ENCODE measurements at regions of chr4 and their contacts with region 1.

Region 1: GRCh38 chr4:185304944-185305690 is 90.6 kb downstream of the LRP2BP start:
- DNase-seq: peak; percentile 68
- ATAC-seq: peak; percentile 73
- H3K4me3 ChIP-seq: no peak overlapping the region
- H3K27ac ChIP-seq: peak overlapping the region; percentile 99
- H3K4me1 ChIP-seq: peaks cover 59% of the 10 kb centered on the region
- H3K27me3 ChIP-seq: no peaks in the 10 kb centered on the region
- CTCF ChIP-seq: peak; percentile 70 to 79 (median 73)
- EP300 ChIP-seq: no peak
- POLR2A ChIP-seq: no peak
- RAD21 ChIP-seq: peak; percentile 83

Region 2: DNA sequence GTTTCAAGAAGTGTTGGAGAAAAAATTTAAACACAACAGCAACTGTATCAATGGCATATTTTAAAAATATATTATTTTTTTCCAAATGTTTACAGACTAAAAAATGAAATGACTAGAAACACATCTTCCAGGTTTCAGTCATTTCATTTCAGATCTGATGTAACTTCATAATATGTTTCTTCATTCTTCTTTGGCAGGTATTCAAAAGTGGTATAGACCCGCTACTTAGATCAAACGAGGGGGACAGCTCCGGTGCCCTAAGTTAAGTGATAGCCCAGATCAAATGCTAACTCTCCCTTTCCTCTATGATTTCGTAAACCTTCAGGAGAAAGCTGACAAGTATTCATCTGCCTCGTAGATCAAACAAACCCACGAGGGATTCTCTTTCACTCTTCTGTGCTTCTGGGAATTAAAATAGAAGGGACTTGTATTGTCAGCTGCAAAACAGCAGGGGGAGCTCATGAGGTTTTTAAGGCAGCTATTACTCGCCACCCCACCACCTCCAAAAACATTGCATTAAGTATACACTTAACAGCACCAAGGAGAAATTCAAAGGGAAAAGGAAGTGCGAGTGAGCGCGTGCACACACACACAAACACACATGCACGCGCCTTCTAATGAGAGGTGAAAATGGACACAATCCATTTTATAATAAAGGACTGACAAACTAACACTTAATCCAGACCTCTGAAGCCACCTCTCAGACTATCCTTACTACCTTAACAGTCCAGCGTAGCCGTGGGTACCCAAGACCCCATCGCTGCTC is 265.4 kb before region 1 on chr4:
- CTCF ChIA-PET with region 1: interaction called, 7 read pairs
- POLR2A ChIA-PET with region 1: no interaction called
- RAD21 ChIA-PET with region 1: interaction called, 19 read pairs
- SMC1A ChIA-PET with region 1: interaction called, 12 read pairs
- in situ Hi-C with region 1: no loop called
- intact Hi-C with region 1: loop called (anchors 5 kb)
- DNase-seq: peak; percentile 23
- ATAC-seq: peak; percentile 83
- H3K4me3 ChIP-seq: no peak overlapping the region
- H3K27ac ChIP-seq: no peak overlapping the region
- H3K4me1 ChIP-seq: no peaks in the 10 kb centered on the region
- H3K27me3 ChIP-seq: no peaks in the 10 kb centered on the region
- CTCF ChIP-seq: peak; percentile 73 to 80 (median 77)
- EP300 ChIP-seq: no peak
- POLR2A ChIP-seq: no peak
- RAD21 ChIP-seq: peak; percentile 74

Region 3: DNA sequence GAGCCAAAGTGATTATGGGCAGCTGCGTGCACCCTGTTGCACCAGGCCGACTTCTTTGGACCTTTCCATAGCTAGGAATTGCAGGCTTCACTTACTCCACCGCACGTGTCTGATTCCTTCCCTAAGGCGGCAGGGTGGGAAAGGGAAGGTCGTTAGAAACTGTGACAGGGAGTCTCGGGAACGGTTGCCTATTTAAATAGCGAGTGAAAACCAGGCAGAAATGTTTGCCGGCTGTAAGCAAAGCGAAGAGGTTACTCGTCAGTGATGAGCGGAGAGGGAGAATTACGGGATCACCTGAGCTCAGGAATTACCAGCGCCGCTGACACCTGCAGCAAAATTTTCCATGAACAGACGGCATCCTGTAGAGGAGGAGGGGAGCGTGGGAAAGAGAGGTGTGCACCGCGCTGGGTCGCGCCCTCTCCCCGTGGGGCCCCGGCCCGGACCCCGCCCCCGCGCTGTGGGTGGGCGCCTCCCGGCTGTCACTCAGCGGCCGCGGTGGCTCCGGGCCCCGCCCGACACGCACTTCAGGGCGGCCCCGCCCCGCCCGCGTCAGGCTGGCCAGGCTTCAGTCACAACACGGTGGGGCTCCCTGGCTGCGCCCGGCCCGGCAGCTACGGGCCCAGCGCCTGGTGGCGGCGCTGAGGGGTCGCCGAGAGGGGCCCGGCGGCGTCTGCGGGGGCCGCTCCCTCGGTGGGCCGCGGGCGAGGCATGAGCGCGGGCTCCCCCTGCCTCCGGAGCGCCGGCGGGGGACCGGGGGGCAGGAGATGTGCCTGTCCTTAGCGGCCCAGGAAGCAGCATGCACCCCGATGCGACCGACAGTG is 95.9 kb before region 1 on chr4 and contains the start of gene SNX25:
- CTCF ChIA-PET with region 1: interaction called, 14 read pairs
- POLR2A ChIA-PET with region 1: interaction called, 17 read pairs
- RAD21 ChIA-PET with region 1: interaction called, 28 read pairs
- SMC1A ChIA-PET with region 1: interaction called, 119 read pairs
- in situ Hi-C with region 1: no loop called
- intact Hi-C with region 1: loop called (anchors 2 kb)
- DNase-seq: no peak
- ATAC-seq: peak; percentile 80
- H3K4me3 ChIP-seq: peak within 1 kb of the TSS; percentile 100
- H3K27ac ChIP-seq: peak within 1 kb of the TSS; percentile 84
- H3K4me1 ChIP-seq: peaks cover 28% of the 10 kb centered on the region
- H3K27me3 ChIP-seq: no peaks in the 10 kb centered on the region
- CTCF ChIP-seq: peak in 2 of 3 experiments; percentile 9 to 27; a peak in 1 of 6 replicates
- EP300 ChIP-seq: no peak
- POLR2A ChIP-seq: peak; percentile 85
- RAD21 ChIP-seq: peak; percentile 41; the same call in 1 of the 2 replicates
- polyA plus RNA-seq, gene SNX25: 19.6 to 27.8 TPM

Region 4: DNA sequence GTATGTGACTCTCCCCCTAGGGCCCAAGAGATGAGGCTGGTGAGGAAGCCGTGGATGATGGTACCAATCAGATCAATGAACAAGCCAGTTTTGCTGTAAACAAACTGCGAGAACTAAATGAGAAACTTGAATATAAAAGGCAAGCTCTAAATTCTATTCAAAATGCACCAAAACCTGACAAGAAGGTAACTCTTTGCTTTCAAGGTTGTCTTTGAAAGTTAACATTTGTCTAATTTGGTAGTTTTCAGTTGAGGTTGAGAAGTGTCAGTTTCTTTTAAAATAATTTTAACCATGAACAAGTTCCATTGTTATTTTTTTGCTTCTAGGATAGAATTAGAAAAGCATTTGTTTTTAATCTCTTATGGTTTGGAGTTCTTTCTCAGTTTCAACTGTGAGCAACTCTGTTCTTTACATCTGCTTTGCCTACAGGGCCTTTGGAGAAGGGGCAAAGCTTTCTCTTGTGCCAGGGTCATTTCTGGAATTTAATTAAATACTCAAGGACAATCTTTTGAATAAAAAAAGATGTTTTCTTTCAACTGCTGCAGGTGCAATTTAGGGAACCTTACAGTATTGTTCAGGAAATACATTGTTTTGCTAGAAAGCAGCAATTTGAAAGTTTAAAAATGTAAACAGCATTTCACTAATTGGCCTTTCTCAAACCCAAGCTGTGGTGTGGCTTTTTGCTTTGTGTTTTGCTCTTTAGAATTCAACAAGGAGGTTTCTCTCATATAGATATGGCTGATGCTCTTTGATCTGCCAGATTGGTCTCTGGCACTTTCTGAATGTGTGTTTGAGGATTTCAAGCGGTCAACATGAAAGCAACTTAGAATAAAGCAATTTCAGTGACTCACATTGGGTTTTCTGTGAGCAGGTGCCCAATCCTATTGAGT is 27.7 kb after region 1 on chr4:
- CTCF ChIA-PET with region 1: interaction called, 10 read pairs
- POLR2A ChIA-PET with region 1: interaction called, 13 read pairs
- RAD21 ChIA-PET with region 1: interaction called, 6 read pairs
- SMC1A ChIA-PET with region 1: interaction called, 132 read pairs
- in situ Hi-C with region 1: no loop called
- intact Hi-C with region 1: loop called (anchors 1 kb)
- DNase-seq: peak; percentile 79
- ATAC-seq: peak; percentile 94
- H3K4me3 ChIP-seq: no peak overlapping the region
- H3K27ac ChIP-seq: peak overlapping the region; percentile 89
- H3K4me1 ChIP-seq: peaks cover 56% of the 10 kb centered on the region
- H3K27me3 ChIP-seq: no peaks in the 10 kb centered on the region
- CTCF ChIP-seq: no peak
- EP300 ChIP-seq: peak; percentile 51 to 55; a peak in 3 of 4 replicates
- POLR2A ChIP-seq: no peak
- RAD21 ChIP-seq: no peak

Region 5: GRCh38 chr4:185352741-185353140 is 47.6 kb after region 1 on chr4:
- CTCF ChIA-PET with region 1: interaction called, 14 read pairs
- POLR2A ChIA-PET with region 1: interaction called, 24 read pairs
- RAD21 ChIA-PET with region 1: interaction called, 14 read pairs
- SMC1A ChIA-PET with region 1: interaction called, 31 read pairs
- in situ Hi-C with region 1: no loop called
- intact Hi-C with region 1: no loop called
- DNase-seq: no peak
- ATAC-seq: peak; percentile 40
- H3K4me3 ChIP-seq: no peak overlapping the region
- H3K27ac ChIP-seq: 0 out of 2 replicates have a peak overlapping the region, but pooled peaks have one; percentile 25
- H3K4me1 ChIP-seq: peaks cover 28% of the 10 kb centered on the region
- H3K27me3 ChIP-seq: no peaks in the 10 kb centered on the region
- CTCF ChIP-seq: no peak
- EP300 ChIP-seq: no peak
- POLR2A ChIP-seq: peak; percentile 47; the same call in 1 of the 2 replicates
- RAD21 ChIP-seq: no peak

Region 6: DNA sequence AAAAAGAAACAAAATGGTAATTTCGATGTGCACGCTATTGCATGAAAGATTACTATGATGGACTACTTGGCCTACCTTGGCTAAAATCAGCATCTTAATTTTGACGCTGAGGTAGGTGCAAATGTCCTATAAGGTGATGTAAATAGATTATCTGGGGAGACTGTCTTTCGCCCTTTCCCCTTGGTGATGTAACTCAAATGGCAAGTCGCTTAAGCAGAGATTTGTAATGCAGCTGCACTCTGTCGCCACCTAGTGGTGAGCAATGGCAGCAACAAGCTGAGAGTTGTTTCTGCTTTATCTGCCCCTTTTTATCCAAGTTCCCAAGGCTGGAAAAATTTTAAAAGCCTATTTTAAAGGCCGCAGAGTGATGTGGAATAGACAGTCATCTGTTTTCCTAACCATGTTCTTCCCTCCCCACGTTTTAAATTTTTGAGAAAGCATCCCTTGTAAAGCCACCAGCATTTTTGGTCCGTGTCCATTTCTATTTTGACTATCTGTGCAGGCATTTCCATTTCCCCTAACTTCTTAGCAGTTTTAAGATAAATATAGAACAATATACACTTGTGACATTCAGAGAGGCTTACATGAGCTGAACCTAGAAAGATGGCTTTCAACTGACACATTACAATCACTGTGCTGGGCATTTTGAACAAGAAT is 292.5 kb after region 1 on chr4:
- CTCF ChIA-PET with region 1: interaction called, 3 read pairs
- POLR2A ChIA-PET with region 1: no interaction called
- RAD21 ChIA-PET with region 1: interaction called, 4 read pairs
- SMC1A ChIA-PET with region 1: interaction called, 3 read pairs
- in situ Hi-C with region 1: no loop called
- intact Hi-C with region 1: loop called (anchors 5 kb)
- DNase-seq: peak; percentile 33
- ATAC-seq: peak; percentile 84
- H3K4me3 ChIP-seq: no peak overlapping the region
- H3K27ac ChIP-seq: no peak overlapping the region
- H3K4me1 ChIP-seq: peaks cover 3% of the 10 kb centered on the region; the same call in 1 of the 2 replicates
- H3K27me3 ChIP-seq: no peaks in the 10 kb centered on the region
- CTCF ChIP-seq: peak; percentile 95 to 99 (median 99); a peak in 5 of 6 replicates
- EP300 ChIP-seq: no peak
- POLR2A ChIP-seq: no peak
- RAD21 ChIP-seq: peak; percentile 98